ENCODE measurements at regions of chr2 and their contacts with region 1.

Region 1: GRCh38 chr2:199085261-199085660 is 372.5 kb downstream of the SATB2 start:
- DNase-seq: no peak
- H3K4me3 ChIP-seq: no peak overlapping the region
- H3K27ac ChIP-seq: no peak overlapping the region
- H3K4me1 ChIP-seq: no peaks in the 10 kb centered on the region
- H3K27me3 ChIP-seq: no peaks in the 10 kb centered on the region
- CTCF ChIP-seq: no peak

Region 2: DNA sequence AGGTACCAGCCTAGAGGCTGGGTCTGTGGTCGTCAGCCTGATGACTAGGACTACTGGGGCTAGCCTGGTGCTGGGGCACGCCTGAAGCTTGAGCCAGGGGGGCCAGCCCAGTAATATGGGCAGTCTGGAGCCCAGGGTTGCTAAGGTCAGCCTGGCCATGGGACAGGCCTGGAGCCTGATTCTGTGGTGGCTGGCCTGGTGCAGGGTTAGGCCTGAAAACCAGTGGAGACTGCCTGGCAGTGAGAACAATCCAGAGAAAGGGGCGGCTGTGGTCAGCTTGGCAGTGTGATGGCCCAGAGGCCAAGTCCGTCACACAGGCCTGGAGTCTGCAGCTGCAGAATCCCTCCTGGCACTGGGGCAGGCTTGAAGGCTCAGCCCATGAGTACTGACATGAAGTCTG is 73.4 kb before region 1 on chr2:
- CTCF ChIA-PET with region 1: no interaction called
- POLR2A ChIA-PET with region 1: no interaction called
- intact Hi-C with region 1: no loop called
- DNase-seq: no peak
- H3K4me3 ChIP-seq: no peak overlapping the region
- H3K27ac ChIP-seq: no peak overlapping the region
- H3K4me1 ChIP-seq: no peaks in the 10 kb centered on the region
- H3K27me3 ChIP-seq: no peaks in the 10 kb centered on the region
- CTCF ChIP-seq: no peak

Region 3: DNA sequence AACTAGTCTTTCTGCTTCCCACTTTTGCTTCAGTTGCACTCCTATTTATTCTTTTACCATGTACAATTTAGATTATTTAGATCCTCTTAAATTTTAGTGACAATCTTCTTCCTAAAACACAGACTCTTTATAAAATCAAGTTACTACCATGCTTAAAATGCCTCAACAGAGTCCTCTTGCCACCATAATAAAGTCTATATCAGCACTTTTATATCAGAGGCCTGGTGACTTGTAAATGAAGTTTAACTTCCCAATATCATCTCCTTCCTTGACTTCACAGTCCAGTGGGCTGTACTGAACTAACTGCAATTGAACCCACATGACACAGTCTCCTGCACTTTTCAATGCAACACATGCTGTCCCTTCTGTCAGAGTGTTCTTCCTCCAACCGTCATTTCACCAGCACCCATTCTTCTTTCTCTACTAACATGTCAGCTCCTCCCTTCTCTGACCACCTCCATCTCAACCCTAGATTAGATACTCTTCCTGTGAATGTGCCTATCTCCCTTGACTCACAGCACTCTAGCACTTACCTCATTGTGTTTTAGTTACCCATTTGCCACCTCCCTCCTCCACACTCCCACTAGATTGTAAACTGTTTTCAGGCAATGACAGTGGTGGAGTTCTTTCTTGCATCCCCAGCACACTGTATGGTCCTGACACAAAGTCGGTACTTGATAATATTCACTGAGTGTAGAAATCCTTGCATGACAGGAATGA is 42.4 kb before region 1 on chr2:
- CTCF ChIA-PET with region 1: no interaction called
- POLR2A ChIA-PET with region 1: no interaction called
- intact Hi-C with region 1: loop called (anchors 5 kb)
- DNase-seq: no peak
- H3K4me3 ChIP-seq: no peak overlapping the region
- H3K27ac ChIP-seq: no peak overlapping the region
- H3K4me1 ChIP-seq: no peaks in the 10 kb centered on the region
- H3K27me3 ChIP-seq: no peaks in the 10 kb centered on the region
- CTCF ChIP-seq: no peak

Measured in PC-9 (cell line).